Caco-2 (cell line): ENCODE measurements at regions of chr19 and their contacts with region 1.

Region 1: GRCh38 chr19:18349524-18350128 is 9.2 kb downstream of the PGPEP1 start:
- DNase-seq: peak; percentile 50 to 73
- H3K4me3 ChIP-seq: no peak overlapping the region
- H3K4me3 Mint-ChIP-seq: no peak overlapping the region
- H3K27ac Mint-ChIP-seq: no peak overlapping the region
- H3K4me1 ChIP-seq: no peaks in the 10 kb centered on the region
- H3K4me1 Mint-ChIP-seq: peaks cover 14% of the 10 kb centered on the region
- H3K27me3 ChIP-seq: no peaks in the 10 kb centered on the region
- H3K27me3 Mint-ChIP-seq: no peaks in the 10 kb centered on the region
- CTCF ChIP-seq: peak; percentile 81 to 85

Region 2: GRCh38 chr19:18401580-18402112 is 52.0 kb after region 1 on chr19:
- CTCF ChIA-PET with region 1: interaction called, 4 read pairs
- POLR2A ChIA-PET with region 1: interaction called, 11 read pairs
- intact Hi-C with region 1: no loop called
- DNase-seq: peak; percentile 74 to 83
- H3K4me3 ChIP-seq: peak overlapping the region; percentile 25
- H3K4me3 Mint-ChIP-seq: peak overlapping the region; percentile 46
- H3K27ac Mint-ChIP-seq: peak overlapping the region; percentile 77
- H3K4me1 ChIP-seq: peaks cover 11% of the 10 kb centered on the region
- H3K4me1 Mint-ChIP-seq: peaks cover 21% of the 10 kb centered on the region
- H3K27me3 ChIP-seq: no peaks in the 10 kb centered on the region
- H3K27me3 Mint-ChIP-seq: no peaks in the 10 kb centered on the region
- CTCF ChIP-seq: peak; percentile 41 to 68

Region 3: GRCh38 chr19:18408053-18408476 is 58.4 kb after region 1 on chr19:
- CTCF ChIA-PET with region 1: interaction called, 14 read pairs
- POLR2A ChIA-PET with region 1: interaction called, 11 read pairs
- intact Hi-C with region 1: loop called (anchors 1 kb)
- DNase-seq: peak in 1 of 2 experiments; percentile 63
- H3K4me3 ChIP-seq: no peak overlapping the region
- H3K4me3 Mint-ChIP-seq: no peak overlapping the region
- H3K27ac Mint-ChIP-seq: no peak overlapping the region
- H3K4me1 ChIP-seq: peaks cover 2% of the 10 kb centered on the region
- H3K4me1 Mint-ChIP-seq: peaks cover 11% of the 10 kb centered on the region
- H3K27me3 ChIP-seq: no peaks in the 10 kb centered on the region
- H3K27me3 Mint-ChIP-seq: no peaks in the 10 kb centered on the region
- CTCF ChIP-seq: peak; percentile 59 to 63

Region 4: DNA sequence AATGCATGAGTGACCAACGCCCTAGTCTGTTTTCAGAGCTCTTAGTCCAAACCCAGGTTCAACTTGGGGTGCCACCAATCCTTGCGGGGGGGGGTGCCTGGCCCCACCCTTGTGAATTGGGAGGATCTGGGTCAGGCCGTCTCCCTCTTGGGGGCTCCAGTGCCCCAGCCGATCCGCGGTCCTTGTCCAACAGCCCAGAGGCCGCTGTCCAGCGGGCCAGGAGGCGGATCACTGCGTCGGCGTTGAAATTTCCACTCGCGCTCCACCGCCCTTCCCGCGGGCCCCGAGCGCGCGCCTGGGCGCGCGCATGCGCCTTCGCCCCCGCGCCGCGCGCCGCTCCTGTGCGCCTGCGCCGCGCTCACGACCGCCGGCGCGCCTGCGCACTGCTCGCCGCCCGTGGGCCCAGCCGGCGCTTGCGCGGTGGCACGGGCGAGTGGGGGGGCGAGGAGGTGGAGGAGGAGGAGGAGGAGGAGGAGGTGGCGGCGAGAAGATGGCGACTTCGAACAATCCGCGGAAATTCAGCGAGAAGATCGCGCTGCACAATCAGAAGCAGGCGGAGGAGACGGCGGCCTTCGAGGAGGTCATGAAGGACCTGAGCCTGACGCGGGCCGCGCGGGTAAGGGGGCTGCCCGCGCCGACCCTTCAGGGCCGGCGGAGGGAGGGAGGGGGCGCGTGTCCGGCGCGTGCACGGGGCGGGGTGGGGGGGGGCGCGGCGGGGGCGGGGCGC is 333.8 kb after region 1 on chr19 and contains the start of gene CRTC1:
- CTCF ChIA-PET with region 1: interaction called, 10 read pairs
- POLR2A ChIA-PET with region 1: no interaction called
- intact Hi-C with region 1: no loop called
- DNase-seq: peak; percentile 90 to 93
- H3K4me3 ChIP-seq: peak within 1 kb of the TSS; percentile 92
- H3K4me3 Mint-ChIP-seq: peak within 1 kb of the TSS; percentile 84
- H3K27ac Mint-ChIP-seq: peak within 1 kb of the TSS; percentile 63
- H3K4me1 ChIP-seq: peaks cover 6% of the 10 kb centered on the region
- H3K4me1 Mint-ChIP-seq: no peaks in the 10 kb centered on the region
- H3K27me3 ChIP-seq: no peaks in the 10 kb centered on the region
- H3K27me3 Mint-ChIP-seq: no peaks in the 10 kb centered on the region
- CTCF ChIP-seq: no peak
- total RNA-seq, gene CRTC1: 12.0 and 13.8 TPM in 2 replicates